Natural killer cell (primary cell): ENCODE measurements at regions of chr21 and their contacts with region 1.

Region 1: GRCh38 chr21:18007121-18007520 is 188.0 kb upstream of the C21orf91 start:
- DNase-seq: no peak
- ATAC-seq: no peak
- H3K4me3 ChIP-seq: no peak overlapping the region
- H3K4me3 Mint-ChIP-seq: no peak overlapping the region
- H3K27ac ChIP-seq: no peak overlapping the region
- H3K27ac Mint-ChIP-seq: no peak overlapping the region
- H3K4me1 ChIP-seq: no peaks in the 10 kb centered on the region
- H3K4me1 Mint-ChIP-seq: no peaks in the 10 kb centered on the region
- H3K27me3 ChIP-seq: no peaks in the 10 kb centered on the region
- H3K27me3 Mint-ChIP-seq: peaks cover 0 to 3% of the 10 kb centered on the region in 2 donors
- CTCF ChIP-seq: no peak

Region 2: GRCh38 chr21:17660449-17660848 is 346.7 kb before region 1 on chr21:
- intact Hi-C with region 1: no loop called
- DNase-seq: no peak
- ATAC-seq: no peak
- H3K4me3 ChIP-seq: no peak overlapping the region
- H3K4me3 Mint-ChIP-seq: no peak overlapping the region
- H3K27ac ChIP-seq: no peak overlapping the region
- H3K27ac Mint-ChIP-seq: no peak overlapping the region
- H3K4me1 ChIP-seq: no peaks in the 10 kb centered on the region
- H3K4me1 Mint-ChIP-seq: no peaks in the 10 kb centered on the region
- H3K27me3 ChIP-seq: no peaks in the 10 kb centered on the region
- H3K27me3 Mint-ChIP-seq: peaks cover 13 to 31% of the 10 kb centered on the region in 2 donors
- CTCF ChIP-seq: no peak

Region 3: GRCh38 chr21:17981060-17981740 is 25.9 kb before region 1 on chr21:
- intact Hi-C with region 1: loop called (anchors 2 kb)
- DNase-seq: no peak
- ATAC-seq: no peak
- H3K4me3 ChIP-seq: no peak overlapping the region
- H3K4me3 Mint-ChIP-seq: no peak overlapping the region
- H3K27ac ChIP-seq: no peak overlapping the region
- H3K27ac Mint-ChIP-seq: no peak overlapping the region
- H3K4me1 ChIP-seq: no peaks in the 10 kb centered on the region
- H3K4me1 Mint-ChIP-seq: no peaks in the 10 kb centered on the region
- H3K27me3 ChIP-seq: no peaks in the 10 kb centered on the region
- H3K27me3 Mint-ChIP-seq: no peaks in the 10 kb centered on the region
- CTCF ChIP-seq: no peak